ENCODE measurements at regions of chr5 and their contacts with region 1.

Region 1: GRCh38 chr5:141585594-141585993 is 33.2 kb downstream of the DIAPH1 start:
- DNase-seq: no peak
- ATAC-seq: no peak

Region 2: DNA sequence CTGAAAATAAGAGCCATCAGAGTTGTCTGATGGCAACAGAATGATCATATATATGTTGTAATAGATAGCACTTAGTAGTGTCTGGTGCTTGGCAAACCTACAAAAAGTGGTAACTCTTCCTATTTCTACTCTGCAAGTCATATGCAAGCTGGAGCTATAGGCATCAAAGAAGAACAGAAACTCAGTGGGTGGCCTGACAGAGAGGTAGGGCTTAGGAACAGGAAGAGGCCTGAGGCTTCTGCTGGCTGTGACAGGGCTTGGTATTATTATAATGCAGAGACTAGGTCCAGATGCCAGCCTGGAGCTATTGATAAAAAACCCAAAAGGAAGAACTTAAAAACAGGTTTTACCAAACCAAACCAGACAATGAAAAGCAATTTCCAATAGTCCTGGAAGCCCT is 37.6 kb after region 1 on chr5:
- intact Hi-C with region 1: loop called in 1 of 2 experiments (anchors 5 kb)
- DNase-seq: no peak
- ATAC-seq: no peak

Measured in left colon (tissue), 2 donors.